Breast epithelium (tissue), 4 donors: ENCODE measurements at regions of chr5 and their contacts with region 1.

Region 1: DNA sequence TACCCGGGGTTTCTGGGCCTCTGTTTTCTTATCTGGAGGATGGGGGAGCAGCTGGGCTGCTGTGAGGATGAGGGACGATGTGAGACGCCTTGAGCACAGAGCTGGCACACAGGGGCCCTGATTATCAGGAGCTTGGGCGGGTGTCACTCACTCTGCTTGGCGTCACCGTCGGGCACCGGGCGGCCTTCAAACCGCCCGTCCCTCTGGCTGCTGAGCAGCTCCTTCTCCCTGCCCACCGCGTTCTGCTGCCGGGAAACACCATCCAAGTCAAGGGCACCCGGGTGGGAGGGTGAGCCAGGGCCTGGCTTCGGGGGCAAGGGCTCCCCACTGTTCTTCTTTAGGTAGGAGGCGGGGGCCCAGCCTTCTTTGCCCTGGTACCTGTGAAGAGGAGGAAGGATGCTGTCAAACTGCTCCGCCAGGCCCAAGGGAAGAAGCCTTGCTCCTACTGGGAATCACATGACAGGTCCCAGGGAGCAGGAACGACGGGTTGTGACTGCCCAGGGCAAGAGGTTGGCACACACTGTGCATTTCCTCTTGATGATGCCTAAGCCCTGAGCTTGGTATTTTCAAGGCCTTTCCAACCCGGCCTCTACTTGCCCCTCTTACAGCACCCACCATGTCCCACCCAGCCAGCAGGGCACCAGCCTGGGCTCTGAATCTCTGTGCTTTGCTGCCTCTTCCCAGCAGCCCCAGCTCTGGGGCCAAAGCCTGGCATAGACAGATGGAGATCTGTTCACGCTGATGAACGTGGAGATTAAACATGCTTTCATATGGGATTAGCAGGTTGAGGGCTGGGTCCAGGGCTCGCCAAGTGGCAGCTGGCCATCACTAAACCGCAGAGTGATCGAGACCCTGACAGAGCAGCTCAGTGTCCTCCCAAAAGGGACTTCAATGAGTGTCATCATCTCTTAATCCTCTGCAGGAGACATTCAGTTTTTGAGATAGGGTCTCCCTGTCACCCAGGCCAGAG is 66.9 kb upstream of the UBTD2 start:
- DNase-seq: peak in 1 of 2 donors; percentile 59
- H3K4me3 ChIP-seq: no peak overlapping the region
- H3K27ac ChIP-seq: no peak overlapping the region
- H3K4me1 ChIP-seq: no peaks in the 10 kb centered on the region
- H3K27me3 ChIP-seq: no peaks in the 10 kb centered on the region
- CTCF ChIP-seq: no peak
- POLR2A ChIP-seq: no peak

Region 2: GRCh38 chr5:171965745-171966144 is 384.8 kb before region 1 on chr5:
- intact Hi-C with region 1: loop called (anchors 5 kb)
- DNase-seq: no peak
- H3K4me3 ChIP-seq: no peak overlapping the region
- H3K27ac ChIP-seq: no peak overlapping the region
- H3K4me1 ChIP-seq: no peaks in the 10 kb centered on the region
- H3K27me3 ChIP-seq: no peaks in the 10 kb centered on the region
- CTCF ChIP-seq: no peak
- POLR2A ChIP-seq: no peak

Region 3: DNA sequence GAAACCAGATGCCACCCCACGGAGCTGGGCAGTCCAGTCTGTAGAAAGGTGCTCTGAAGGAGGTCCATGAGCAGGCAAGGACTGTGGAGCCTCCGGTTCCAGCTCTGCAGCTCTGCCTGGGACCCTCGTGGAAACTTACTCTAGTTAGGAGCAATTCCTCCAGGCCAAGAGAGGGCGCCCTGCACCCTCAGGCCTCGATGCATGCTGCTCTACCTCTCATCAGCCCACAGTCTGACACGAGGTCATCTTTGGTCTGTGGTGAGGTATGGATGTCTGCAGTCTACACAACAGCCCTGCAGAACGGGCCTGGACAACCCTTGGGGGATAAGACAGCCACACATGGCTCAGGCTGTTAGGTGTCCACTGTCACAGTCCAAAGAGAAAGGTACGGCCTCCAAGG is 16.3 kb before region 1 on chr5:
- intact Hi-C with region 1: loop called (anchors 1 kb)
- DNase-seq: no peak
- H3K4me3 ChIP-seq: no peak overlapping the region
- H3K27ac ChIP-seq: no peak overlapping the region
- H3K4me1 ChIP-seq: no peaks in the 10 kb centered on the region
- H3K27me3 ChIP-seq: no peaks in the 10 kb centered on the region
- CTCF ChIP-seq: no peak
- POLR2A ChIP-seq: no peak